Natural killer cell (primary cell): ENCODE measurements at regions of chr15 and their contacts with region 1.

Region 1: DNA sequence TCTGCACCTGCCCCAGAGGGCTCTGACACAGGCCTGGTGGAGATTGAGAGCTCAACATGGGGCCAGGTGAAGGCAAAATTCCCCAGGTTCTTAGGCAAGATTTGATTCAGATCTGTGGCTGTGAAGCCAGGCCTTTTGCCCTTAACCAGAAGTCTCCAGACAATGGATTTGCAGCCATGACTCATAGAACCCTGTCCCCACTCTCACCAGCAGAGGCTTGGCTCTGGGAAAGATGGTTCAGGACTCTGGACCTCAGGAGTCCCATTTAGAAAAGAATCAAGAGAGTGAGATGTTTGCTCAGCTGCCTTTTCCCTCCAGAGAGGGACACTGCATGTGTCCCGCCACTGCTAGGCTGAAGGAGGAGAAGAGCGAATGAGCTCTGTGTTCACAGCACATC is 361.4 kb upstream of the ICE2 start:
- DNase-seq: peak in 1 of 2 donors; percentile 53
- ATAC-seq: peak in 1 of 3 donors; percentile 2
- H3K4me3 ChIP-seq: no peak overlapping the region
- H3K4me3 Mint-ChIP-seq: peak overlapping the region; percentile 90
- H3K27ac ChIP-seq: peak overlapping the region; percentile 81
- H3K27ac Mint-ChIP-seq: peak overlapping the region; percentile 87 to 95
- H3K4me1 ChIP-seq: peaks cover 67% of the 10 kb centered on the region
- H3K4me1 Mint-ChIP-seq: peaks cover 72 to 74% of the 10 kb centered on the region in 2 donors
- H3K27me3 ChIP-seq: no peaks in the 10 kb centered on the region
- H3K27me3 Mint-ChIP-seq: no peaks in the 10 kb centered on the region
- CTCF ChIP-seq: no peak

Region 2: DNA sequence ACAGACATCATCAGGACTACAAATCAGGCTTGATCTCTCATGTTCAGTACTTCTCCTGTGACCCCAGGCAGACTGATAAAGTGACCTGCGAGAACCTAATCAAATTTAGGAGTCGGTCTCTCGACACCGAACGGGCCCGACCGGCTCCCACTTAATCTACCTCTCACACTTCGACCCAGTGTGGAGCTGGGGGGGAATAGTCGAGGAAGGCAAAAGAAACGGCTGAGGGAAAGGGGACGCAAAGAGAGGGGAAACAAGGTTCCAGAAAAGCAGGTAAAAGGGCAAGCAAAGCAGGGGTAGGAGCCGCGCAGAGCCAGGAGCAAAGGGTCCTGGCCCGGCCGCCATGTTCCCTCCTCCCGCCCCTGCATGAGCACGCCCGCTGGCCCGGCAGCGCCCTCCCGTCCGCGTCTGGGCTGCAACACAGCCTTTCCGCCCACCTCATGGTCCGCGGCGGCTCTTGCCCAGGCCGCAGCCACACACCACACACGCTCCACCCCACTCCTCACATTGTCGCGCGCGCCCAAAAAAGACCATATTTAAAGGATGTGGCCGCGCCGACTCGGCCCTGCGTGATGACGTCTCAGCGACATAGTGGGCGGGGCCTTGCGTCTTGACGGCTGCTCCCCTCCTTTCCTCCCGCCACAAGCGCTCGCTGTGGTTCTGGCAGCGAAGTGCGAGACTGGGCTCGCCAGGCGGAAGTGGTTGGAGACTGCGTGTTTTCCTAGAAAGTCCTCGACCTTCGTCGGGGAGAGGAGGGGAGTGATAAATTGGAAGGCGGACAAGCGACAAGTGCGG is 361.5 kb before region 1 on chr15 and contains the start of gene ICE2:
- intact Hi-C with region 1: loop called (anchors 2 kb)
- DNase-seq: peak; percentile 96 to 98
- ATAC-seq: peak; percentile 87 to 96 (median 87)
- H3K4me3 ChIP-seq: peak within 1 kb of the TSS; percentile 65
- H3K4me3 Mint-ChIP-seq: peak within 1 kb of the TSS; percentile 98
- H3K27ac ChIP-seq: peak within 1 kb of the TSS; percentile 83
- H3K27ac Mint-ChIP-seq: peak within 1 kb of the TSS; percentile 99
- H3K4me1 ChIP-seq: peaks cover 11% of the 10 kb centered on the region
- H3K4me1 Mint-ChIP-seq: peaks cover 35 to 45% of the 10 kb centered on the region in 2 donors
- H3K27me3 ChIP-seq: no peaks in the 10 kb centered on the region
- H3K27me3 Mint-ChIP-seq: no peaks in the 10 kb centered on the region
- CTCF ChIP-seq: no peak
- total RNA-seq, gene ICE2: 21.7 to 36.7 (median 32.9) TPM

Region 3: DNA sequence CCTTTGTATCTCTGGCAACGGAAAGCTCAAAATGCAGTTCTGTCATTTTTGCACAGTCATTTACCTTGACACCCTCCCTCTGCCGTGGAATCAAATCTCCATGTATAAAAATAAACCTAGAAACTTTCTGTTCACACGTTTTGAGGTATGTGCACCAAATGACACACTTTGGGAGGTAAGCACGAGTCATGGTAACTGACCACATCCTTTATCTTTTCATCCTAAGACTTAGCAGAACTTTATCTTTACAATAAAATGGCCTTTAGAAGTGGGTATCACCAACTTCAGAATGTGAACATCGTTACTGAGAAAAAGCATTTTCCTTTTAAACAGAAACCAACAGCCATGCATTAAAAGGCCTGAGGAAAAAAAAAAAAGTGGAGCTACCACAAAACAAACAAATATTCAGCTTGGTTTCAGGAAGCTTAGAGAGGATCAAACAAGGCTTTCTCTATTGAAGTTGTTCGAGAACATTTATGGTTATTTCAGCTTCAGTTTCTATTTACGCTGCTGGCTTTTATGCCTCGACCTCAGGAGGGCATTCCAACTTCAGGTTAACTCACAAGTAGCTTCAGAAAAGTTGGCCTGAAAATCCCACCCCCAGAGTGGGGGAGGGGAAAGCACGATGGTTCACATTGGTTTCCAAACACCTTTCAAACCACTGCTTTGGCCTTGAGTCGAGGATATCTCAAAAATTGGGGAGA is 190.3 kb before region 1 on chr15:
- intact Hi-C with region 1: loop called (anchors 2 kb)
- DNase-seq: peak in 1 of 2 donors; percentile 82
- ATAC-seq: peak; percentile 76 to 89 (median 85)
- H3K4me3 ChIP-seq: no peak overlapping the region
- H3K4me3 Mint-ChIP-seq: peak overlapping the region; percentile 69
- H3K27ac ChIP-seq: peak overlapping the region; percentile 54
- H3K27ac Mint-ChIP-seq: peak overlapping the region; percentile 88
- H3K4me1 ChIP-seq: peaks cover 23% of the 10 kb centered on the region
- H3K4me1 Mint-ChIP-seq: peaks cover 38 to 41% of the 10 kb centered on the region in 2 donors
- H3K27me3 ChIP-seq: no peaks in the 10 kb centered on the region
- H3K27me3 Mint-ChIP-seq: peaks cover 0 to 4% of the 10 kb centered on the region in 2 donors
- CTCF ChIP-seq: no peak

Region 4: GRCh38 chr15:60859996-60860494 is 19.7 kb after region 1 on chr15:
- intact Hi-C with region 1: loop called (anchors 2 kb)
- DNase-seq: peak in 1 of 2 donors; percentile 31
- ATAC-seq: peak; percentile 81 to 94 (median 89)
- H3K4me3 ChIP-seq: no peak overlapping the region
- H3K4me3 Mint-ChIP-seq: peak overlapping the region; percentile 76
- H3K27ac ChIP-seq: no peak overlapping the region
- H3K27ac Mint-ChIP-seq: peak overlapping the region; percentile 71 to 79
- H3K4me1 ChIP-seq: peaks cover 11% of the 10 kb centered on the region
- H3K4me1 Mint-ChIP-seq: peaks cover 54 to 63% of the 10 kb centered on the region in 2 donors
- H3K27me3 ChIP-seq: no peaks in the 10 kb centered on the region
- H3K27me3 Mint-ChIP-seq: no peaks in the 10 kb centered on the region
- CTCF ChIP-seq: no peak